MCF 10A (cell line): ENCODE measurements at regions of chr7 and their contacts with region 1.

Region 1: DNA sequence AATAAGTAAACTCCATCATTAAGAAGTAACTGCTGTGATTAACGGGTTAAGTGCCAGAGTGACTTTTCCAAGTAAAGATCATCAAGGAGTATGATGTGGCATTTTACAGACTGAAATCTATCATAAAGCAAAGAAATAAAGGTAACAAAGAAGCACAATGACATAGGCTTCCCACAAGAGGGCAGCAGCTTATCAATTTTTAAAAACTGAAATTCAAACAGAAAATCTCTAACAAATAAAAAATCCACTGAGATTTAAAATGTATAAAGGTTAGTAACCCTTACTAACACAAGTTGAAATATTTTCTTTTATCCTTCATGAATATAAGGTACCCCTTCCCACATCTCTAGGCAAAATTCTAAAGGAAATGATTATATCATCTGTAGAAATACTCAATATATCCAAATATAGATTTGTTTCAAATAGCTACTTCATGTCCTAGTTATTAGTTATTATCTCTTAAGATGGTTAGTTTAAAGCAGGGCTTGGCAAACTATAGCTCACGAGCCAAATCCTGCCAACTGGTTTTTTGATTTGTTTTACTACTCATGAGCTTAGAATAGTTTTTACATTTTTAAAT is 29.2 kb downstream of the FAM3C start:
- DNase-seq: peak; percentile 37
- H3K4me3 Mint-ChIP-seq: no peak overlapping the region
- H3K27ac Mint-ChIP-seq: peak overlapping the region; percentile 39
- H3K4me1 Mint-ChIP-seq: peaks cover 7% of the 10 kb centered on the region
- H3K27me3 Mint-ChIP-seq: no peaks in the 10 kb centered on the region
- CTCF ChIP-seq: peak; percentile 72

Region 2: DNA sequence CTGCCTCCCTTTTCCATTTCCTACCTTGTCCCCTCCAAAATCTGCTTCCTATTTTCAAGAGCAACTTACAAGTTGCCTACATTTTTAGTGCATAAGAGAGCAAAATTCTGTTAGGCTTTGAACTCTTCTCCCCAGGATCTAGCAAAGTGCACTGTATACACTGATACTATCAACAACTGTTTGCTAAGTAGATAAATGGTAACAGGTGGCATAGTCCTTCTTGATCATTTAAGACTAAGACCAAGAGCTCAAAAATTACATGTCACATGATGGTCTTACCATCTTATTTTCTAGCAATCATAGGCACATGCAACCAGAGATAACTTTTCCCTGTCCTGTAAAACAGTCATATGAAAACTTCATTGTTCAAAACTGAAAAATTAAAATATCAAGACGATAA is 13.0 kb after region 1 on chr7:
- CTCF ChIA-PET with region 1: interaction called, 21 read pairs
- POLR2A ChIA-PET with region 1: interaction called, 3 read pairs
- intact Hi-C with region 1: no loop called
- DNase-seq: no peak
- H3K4me3 Mint-ChIP-seq: no peak overlapping the region
- H3K27ac Mint-ChIP-seq: no peak overlapping the region
- H3K4me1 Mint-ChIP-seq: peaks cover 11% of the 10 kb centered on the region
- H3K27me3 Mint-ChIP-seq: no peaks in the 10 kb centered on the region
- CTCF ChIP-seq: no peak

Region 3: DNA sequence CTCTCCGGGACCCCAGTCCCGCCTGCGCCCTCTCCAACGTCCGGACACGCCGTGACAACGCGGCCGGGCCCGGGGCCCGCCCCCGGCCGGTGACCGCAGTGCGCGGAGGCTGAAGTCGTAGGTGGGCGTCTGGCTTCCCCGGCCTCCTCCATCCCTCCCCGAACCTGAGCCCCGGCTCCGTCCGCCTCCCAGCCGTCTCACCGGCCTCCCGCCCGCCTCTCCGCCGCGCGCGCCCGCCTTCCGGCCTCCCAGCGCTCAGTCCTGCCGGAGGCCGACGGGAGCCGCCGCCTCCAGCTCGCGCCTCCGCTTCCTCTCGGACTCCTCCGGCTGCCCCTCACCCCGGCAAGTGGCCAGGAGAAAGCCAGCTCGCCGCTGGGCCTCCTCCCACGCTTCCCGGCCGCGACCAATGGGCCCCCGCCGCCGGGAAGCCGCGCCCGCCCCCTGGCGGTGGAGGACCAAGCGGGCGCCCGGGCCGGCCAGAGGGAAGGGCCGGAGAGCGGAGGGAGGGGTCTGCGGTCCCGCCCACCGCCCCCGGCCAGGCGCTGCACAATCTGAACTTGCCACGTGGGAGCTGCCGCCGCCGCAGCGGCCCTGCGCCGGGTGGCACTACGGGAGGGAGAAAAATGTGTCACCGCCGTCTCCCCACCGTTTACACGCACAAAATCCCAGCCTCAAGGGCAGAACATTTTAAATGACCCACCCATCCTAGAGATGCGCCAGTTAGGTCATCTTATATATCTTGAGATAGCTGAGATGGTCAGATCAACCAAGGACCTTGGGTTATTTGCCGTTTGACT is 29.2 kb after region 1 on chr7 and contains the start of gene FAM3C:
- CTCF ChIA-PET with region 1: interaction called, 14 read pairs
- POLR2A ChIA-PET with region 1: interaction called, 3 read pairs
- intact Hi-C with region 1: loop called (anchors 1 kb)
- DNase-seq: peak; percentile 95
- H3K4me3 Mint-ChIP-seq: peak within 1 kb of the TSS; percentile 80
- H3K27ac Mint-ChIP-seq: peak within 1 kb of the TSS; percentile 23
- H3K4me1 Mint-ChIP-seq: peaks cover 17% of the 10 kb centered on the region
- H3K27me3 Mint-ChIP-seq: no peaks in the 10 kb centered on the region
- CTCF ChIP-seq: peak; percentile 82
- total RNA-seq, gene FAM3C: 56.5 and 64.1 TPM in 2 replicates

Region 4: GRCh38 chr7:121752706-121753105 is 385.8 kb after region 1 on chr7:
- CTCF ChIA-PET with region 1: interaction called, 6 read pairs
- POLR2A ChIA-PET with region 1: interaction called, 3 read pairs
- intact Hi-C with region 1: loop called (anchors 2 kb)
- DNase-seq: peak; percentile 43
- H3K4me3 Mint-ChIP-seq: no peak overlapping the region
- H3K27ac Mint-ChIP-seq: no peak overlapping the region
- H3K4me1 Mint-ChIP-seq: no peaks in the 10 kb centered on the region
- H3K27me3 Mint-ChIP-seq: no peaks in the 10 kb centered on the region
- CTCF ChIP-seq: peak; percentile 39